Aorta (tissue), 5 donors: ENCODE measurements at regions of chrX and their contacts with region 1.

Region 1: DNA sequence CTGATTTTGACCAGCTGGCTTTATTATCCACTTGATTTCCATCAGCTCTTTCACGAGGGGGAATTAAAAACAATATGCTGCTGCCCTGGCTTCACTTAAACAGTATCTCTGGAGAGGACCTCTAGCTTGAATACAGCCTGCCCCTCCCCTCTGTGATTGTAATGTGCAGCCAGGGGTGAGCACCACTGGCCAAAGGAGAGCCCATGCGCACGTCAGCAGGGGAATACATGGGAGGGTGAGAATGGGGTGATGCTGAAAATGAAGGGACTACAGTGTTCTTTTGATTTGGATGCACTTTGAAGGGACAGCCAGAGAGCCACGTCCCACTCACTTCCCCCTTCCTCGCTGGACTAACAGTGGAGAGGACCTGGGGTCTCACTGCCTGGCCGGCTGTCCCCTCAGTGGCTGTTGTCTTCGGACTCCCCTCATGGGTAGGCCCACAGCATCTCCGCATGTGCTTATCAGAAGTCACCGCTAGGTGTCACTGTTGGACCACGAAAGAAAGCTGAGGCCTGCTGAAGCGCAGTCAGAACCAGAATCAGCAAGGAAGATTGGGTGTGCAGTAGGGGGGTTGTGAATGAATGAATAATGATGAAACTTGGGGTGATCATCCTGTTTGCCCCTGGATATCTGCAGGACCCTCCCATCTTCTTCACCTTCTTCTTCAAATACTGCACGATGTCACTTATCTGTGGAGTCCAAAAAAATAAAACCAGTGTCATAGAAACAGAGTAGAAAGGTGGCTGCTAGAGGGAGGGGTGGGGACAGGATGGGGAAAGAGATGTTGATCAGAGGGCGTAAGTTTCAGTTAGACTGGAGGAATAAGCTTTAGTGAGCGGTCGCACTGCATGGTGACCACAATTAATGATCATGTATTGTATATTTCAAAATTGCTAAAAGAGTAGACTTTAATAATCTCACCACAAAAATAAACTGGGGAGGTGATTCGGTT is 32.8 kb downstream of the CLCN4 start:
- DNase-seq: peak; percentile 75 to 89
- ATAC-seq: peak; percentile 93
- H3K4me3 ChIP-seq: no peak overlapping the region
- H3K27ac ChIP-seq: no peak overlapping the region
- H3K4me1 ChIP-seq: no peaks in the 10 kb centered on the region
- H3K27me3 ChIP-seq: no peaks in the 10 kb centered on the region

Region 2: GRCh38 chrX:10615931-10616775 is 426.6 kb after region 1 on chrX:
- intact Hi-C with region 1: loop called in 1 of 2 experiments (anchors 5 kb)
- DNase-seq: peak in 1 of 2 donors; percentile 47
- ATAC-seq: peak; percentile 71
- H3K4me3 ChIP-seq: no peak overlapping the region
- H3K27ac ChIP-seq: no peak overlapping the region
- H3K4me1 ChIP-seq: no peaks in the 10 kb centered on the region
- H3K27me3 ChIP-seq: no peaks in the 10 kb centered on the region

Region 3: GRCh38 chrX:10636337-10636736 is 446.7 kb after region 1 on chrX:
- intact Hi-C with region 1: loop called (anchors 2 to 5 kb)
- DNase-seq: no peak
- ATAC-seq: no peak
- H3K4me3 ChIP-seq: peak overlapping the region in 1 of 2 donors; percentile 34
- H3K27ac ChIP-seq: no peak overlapping the region
- H3K4me1 ChIP-seq: no peaks in the 10 kb centered on the region
- H3K27me3 ChIP-seq: no peaks in the 10 kb centered on the region

Region 4: GRCh38 chrX:10722851-10723250 is 533.3 kb after region 1 on chrX:
- intact Hi-C with region 1: loop called (anchors 2 to 5 kb)
- DNase-seq: peak in 1 of 2 donors; percentile 59
- ATAC-seq: peak; percentile 84
- H3K4me3 ChIP-seq: no peak overlapping the region
- H3K27ac ChIP-seq: no peak overlapping the region
- H3K4me1 ChIP-seq: no peaks in the 10 kb centered on the region
- H3K27me3 ChIP-seq: no peaks in the 10 kb centered on the region

Region 5: GRCh38 chrX:11100281-11101035 is 910.9 kb after region 1 on chrX:
- intact Hi-C with region 1: loop called (anchors 5 to 10 kb)
- DNase-seq: peak in 1 of 2 donors; percentile 49
- ATAC-seq: no peak
- H3K4me3 ChIP-seq: no peak overlapping the region
- H3K27ac ChIP-seq: peak overlapping the region in 1 of 2 donors; percentile 76
- H3K4me1 ChIP-seq: no peaks in the 10 kb centered on the region
- H3K27me3 ChIP-seq: no peaks in the 10 kb centered on the region

Region 6: DNA sequence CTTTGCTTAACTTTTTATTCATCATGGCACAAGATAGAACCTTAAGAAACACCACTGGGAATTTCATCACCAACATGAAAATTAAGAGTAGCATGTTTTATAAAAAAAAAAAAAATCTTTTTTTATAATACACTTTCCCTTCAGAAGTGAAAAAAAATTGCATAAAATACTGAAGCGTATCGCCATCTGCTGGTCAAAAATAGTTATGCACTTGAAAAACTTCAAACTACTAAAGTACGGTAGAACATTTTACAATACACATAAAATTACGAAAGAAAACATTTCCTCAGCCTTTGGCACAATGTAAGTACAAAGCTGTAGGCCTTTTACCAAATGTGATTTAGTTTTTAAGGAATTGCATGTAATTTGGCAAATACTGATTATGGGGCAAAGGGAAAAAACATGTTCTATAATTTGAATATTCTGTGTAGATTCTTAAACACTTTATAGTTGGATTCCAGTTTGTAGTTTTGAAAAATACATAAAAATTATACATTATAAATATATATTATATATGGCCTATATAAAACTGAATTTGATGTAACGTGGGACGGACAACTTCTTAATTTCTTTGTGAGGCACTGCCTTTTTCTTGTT is 948.0 kb after region 1 on chrX:
- intact Hi-C with region 1: loop called (anchors 2 to 5 kb)
- DNase-seq: no peak
- ATAC-seq: no peak
- H3K4me3 ChIP-seq: no peak overlapping the region
- H3K27ac ChIP-seq: no peak overlapping the region
- H3K4me1 ChIP-seq: no peaks in the 10 kb centered on the region
- H3K27me3 ChIP-seq: no peaks in the 10 kb centered on the region

Region 7: GRCh38 chrX:11533211-11533651 is 1343.6 kb after region 1 on chrX:
- intact Hi-C with region 1: loop called in 1 of 2 experiments (anchors 10 kb)
- DNase-seq: no peak
- ATAC-seq: peak; percentile 80
- H3K4me3 ChIP-seq: no peak overlapping the region
- H3K27ac ChIP-seq: no peak overlapping the region
- H3K4me1 ChIP-seq: peaks cover 1 to 3% of the 10 kb centered on the region in 2 donors
- H3K27me3 ChIP-seq: no peaks in the 10 kb centered on the region